Left ventricle myocardium superior (tissue), 1 donor: ENCODE measurements at regions of chr12 and their contacts with region 1.

Region 1: GRCh38 chr12:48084841-48085460 is 20.9 kb downstream of the SENP1 start:
- DNase-seq: no peak
- ATAC-seq: no peak

Region 2: DNA sequence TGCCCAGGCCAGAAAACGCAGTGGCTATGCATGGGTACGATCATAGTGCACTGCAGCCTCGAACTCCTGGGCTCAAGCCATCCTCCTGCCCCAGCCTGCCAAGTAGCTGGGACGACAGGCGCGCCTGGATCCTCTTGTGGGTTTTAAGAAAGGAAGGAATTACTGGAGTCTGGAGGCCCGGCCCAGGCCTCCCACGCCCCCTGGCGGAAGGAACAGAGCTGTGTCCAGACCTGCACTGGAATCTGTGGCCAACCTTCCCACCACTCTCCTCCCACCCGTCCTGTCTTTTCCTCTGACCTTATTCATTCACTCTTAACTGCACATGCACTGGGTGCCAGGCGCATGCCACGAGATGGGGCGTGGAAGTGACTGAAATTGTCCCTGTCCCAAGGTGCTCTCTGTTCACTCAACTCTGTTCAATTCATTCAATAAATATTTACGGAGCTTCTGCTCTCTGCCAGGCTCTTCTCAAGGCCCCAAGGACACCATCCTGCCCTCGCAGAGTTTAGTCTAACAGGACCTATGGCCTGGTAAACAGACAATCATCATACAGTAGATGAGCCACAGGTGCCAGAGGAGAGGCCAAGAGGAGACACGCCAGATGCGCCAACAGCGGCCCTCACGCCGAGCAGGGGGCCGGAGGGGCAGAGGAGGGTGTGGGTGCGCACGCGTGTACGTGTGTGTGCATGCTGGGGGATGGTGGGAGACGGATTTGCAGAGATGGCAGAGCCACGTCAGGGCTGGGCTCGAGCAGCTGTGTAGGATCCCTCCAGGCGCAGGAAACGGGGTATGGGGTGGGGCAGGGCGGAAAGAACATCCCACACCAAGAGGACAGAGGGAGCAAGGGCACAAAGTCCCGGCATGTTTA is 135.3 kb before region 1 on chr12:
- intact Hi-C with region 1: no loop called
- DNase-seq: peak; percentile 88
- ATAC-seq: peak; percentile 94

Region 3: DNA sequence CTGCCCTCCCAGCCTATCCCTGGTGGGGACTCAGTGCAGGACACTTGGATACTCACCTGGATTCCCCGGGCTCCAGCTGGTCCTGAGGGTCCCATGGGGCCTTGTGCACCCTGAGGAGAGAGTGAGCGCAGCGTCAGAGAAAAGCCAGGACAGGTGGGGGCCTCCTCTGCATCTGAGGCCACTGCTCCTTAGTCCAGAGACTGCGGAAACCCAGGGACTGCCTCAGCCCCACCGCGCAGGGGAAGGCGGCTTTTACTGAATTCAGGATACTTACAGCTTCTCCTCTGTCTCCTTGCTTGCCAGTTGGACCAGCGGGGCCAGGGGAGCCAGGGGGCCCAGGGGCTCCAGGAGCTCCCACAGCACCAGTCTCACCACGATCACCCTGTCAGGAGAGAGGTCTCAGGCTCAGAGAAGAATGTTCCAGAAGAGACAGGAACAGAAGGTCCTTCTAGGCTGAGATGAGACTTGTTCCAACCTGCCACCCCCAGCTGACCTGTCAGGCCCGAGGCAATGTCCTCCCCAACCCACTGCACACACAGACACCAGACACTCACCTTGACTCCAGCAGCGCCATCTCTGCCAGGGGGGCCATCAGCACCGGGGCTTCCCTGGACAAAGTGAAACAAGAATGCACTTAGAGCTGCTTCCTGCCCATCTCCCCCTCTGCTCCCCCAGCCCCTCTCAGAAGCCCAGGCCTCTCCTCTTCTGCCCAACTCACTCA is 107.7 kb before region 1 on chr12:
- intact Hi-C with region 1: no loop called
- DNase-seq: no peak
- ATAC-seq: no peak

Region 4: DNA sequence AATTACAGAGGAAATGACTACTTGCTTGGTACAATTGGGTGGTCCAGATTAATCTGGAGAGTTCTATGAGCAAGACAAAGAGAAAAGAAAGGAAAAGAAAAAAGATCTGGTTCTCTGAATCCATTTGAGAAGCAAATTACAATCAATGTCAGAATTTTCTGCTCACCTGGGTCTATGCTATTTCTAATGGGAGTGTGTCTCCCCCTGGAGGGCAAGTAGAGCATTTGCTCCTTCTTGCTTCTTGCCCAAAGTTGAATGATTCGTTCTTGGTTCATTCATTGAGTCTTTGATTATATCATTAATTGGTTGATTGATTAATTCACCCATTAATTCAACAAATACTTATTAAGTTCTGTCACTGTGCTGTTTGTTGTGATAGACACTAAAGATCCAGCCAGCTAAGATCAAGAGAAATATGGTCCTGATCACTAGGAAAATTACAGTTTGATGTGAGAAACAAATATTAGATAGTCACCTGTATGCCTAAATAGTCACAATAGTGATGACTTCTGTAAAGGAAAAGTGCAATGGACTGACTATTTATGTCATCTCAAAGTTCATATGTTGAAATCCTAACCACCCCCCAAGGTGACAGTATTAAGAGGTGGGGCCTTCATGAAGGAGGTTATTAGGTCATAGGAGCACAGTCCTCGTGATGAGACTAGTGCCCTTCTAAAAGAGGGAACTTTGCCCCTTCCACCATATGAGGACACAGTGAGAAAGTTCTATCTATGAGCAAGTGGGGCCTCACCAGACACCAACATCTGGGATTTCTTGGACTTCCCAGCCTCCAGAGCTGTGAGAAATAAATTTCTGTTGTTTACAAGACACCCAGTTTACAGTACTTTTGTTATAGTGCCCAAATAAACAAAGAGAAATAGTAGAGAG is 80.4 kb after region 1 on chr12:
- intact Hi-C with region 1: loop called (anchors 5 kb)
- DNase-seq: no peak
- ATAC-seq: peak; percentile 53